ENCODE measurements at regions of chr15 and their contacts with region 1.

Region 1: GRCh38 chr15:94324117-94324826 is 92.9 kb downstream of the MCTP2 start:
- DNase-seq: no peak
- H3K4me3 ChIP-seq: no peak overlapping the region
- CTCF ChIP-seq: peak; percentile 68

Region 2: GRCh38 chr15:93035953-93036800 is 1288.1 kb before region 1 on chr15:
- CTCF ChIA-PET with region 1: interaction called, 14 read pairs
- POLR2A ChIA-PET with region 1: interaction called, 3 read pairs
- DNase-seq: no peak
- H3K4me3 ChIP-seq: no peak overlapping the region
- CTCF ChIP-seq: peak; percentile 61

Region 3: DNA sequence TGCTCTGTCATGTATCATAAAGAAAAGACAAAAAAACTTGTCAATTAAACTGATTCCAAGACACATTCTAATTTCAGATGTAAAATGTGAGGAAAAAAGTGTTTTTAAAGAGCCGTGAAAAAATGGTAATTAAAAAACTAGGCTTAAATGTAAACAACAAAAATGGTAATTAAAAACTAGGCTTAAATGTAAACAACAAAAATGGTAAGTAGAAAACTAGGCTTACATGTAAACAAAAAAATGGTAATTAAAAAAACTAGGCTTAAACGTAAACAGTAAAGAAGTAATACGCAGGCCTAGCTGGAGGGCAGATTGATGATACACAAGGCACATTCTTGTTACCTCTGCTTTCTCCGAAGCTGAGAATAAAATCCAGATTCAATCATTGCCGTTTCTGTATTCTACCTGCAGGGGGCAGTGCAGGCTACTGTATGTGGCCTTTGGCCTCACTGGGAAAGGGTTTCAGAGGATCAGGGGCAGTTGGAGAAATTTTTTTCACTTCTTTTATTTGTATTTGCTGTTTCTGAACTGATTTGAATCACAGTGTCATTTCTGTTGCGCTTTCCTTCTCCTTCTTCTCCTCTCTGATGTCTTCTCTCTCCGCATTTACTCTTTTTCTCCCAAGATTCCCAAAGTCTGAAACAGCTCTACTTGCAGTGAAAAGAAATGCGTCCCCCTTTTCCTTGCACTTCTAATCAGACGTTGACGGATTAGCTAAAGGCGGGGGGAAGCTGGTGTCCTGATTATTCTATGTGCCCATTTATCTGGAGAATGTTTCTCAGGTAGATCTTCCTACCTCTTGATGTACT is 160.1 kb before region 1 on chr15:
- CTCF ChIA-PET with region 1: interaction called, 448 read pairs
- POLR2A ChIA-PET with region 1: no interaction called
- DNase-seq: no peak
- H3K4me3 ChIP-seq: no peak overlapping the region
- CTCF ChIP-seq: peak; percentile 63

Region 4: DNA sequence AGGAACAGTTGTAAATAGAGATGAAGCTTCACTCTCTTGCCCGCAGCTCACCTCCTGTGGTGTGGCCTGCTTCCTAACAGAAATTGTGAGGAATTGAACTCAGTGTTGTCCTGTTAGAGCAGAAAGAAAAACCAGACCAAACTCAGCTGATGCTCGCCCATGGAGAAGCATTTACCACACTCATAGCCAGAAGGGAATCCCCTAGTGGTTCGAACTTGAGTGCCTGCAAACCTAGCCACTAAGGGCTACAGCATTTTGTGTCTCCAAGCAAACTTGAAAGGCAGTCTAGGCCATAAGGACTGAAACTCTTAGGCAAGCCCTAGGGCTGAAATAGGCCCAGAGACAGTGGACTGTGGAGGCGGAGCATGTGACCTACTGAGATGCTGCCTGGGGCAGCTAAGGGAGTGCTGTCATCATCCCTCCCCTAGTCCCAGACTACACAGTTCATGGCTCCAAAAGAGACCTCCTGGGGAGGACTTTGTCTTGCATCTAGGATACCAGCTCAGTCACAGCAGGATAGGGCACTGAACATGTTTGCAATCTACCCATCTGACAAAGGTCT is 137.4 kb before region 1 on chr15:
- CTCF ChIA-PET with region 1: interaction called, 10 read pairs
- POLR2A ChIA-PET with region 1: no interaction called
- DNase-seq: no peak
- H3K4me3 ChIP-seq: no peak overlapping the region
- CTCF ChIP-seq: no peak

Region 5: GRCh38 chr15:94335616-94336015 is 11.3 kb after region 1 on chr15:
- CTCF ChIA-PET with region 1: interaction called, 70 read pairs
- POLR2A ChIA-PET with region 1: no interaction called
- DNase-seq: no peak
- H3K4me3 ChIP-seq: no peak overlapping the region
- CTCF ChIP-seq: no peak